ENCODE measurements at regions of chr16 and their contacts with region 1.

Region 1: DNA sequence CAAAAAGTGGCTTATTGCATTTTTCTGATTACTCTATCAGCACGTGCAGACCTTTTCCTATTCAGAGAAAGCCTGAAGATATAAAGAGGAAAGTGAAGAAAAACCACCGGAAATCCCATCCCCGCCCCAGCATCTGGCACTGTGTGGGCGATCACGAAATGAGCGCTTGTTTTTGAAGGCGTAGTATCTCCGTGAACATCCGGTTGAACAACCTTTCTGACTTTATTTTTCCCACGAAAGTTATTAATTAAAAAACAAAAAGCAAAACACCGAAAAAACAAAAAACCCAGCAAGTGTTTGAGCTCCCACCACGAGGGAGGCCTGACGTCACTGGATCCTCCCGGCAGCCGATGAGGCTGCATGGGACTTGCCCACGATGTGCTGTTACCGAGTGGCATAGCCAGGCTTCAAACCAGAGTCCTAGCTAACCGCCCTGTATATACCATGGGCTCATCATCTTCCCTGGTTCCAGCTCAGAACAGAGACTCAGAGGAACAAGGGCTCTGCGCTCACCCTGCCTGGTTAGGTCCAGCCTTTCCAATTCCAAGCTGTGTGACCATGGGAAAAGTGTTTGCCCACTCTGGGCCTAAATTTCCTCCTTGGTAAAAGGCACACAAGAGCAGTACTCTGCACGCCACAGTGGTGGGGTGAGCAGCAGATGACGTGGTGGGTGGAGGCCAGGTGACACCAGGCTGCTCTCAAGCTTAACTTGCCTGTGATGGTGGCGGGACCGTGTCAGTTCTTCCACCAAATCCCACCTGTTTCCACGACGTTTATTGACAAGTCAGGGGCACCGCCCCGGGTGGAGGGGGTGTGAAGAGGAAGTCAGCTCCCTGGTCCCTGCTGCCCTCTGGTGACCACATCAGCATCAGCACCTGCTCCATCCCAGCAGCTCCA is 34.3 kb upstream of the IL21R start:
- DNase-seq: peak; percentile 73 to 95 (median 92)
- ATAC-seq: peak; percentile 82 to 85
- H3K4me3 Mint-ChIP-seq: peak overlapping the region; percentile 49 to 75 (median 71)
- H3K27ac Mint-ChIP-seq: peak overlapping the region in 9 of 10 donors; percentile 92 to 100 (median 99)
- H3K4me1 Mint-ChIP-seq: peaks cover 23 to 78% (median 55%) of the 10 kb centered on the region in 4 donors
- H3K27me3 Mint-ChIP-seq: no peaks in the 10 kb centered on the region

Region 2: DNA sequence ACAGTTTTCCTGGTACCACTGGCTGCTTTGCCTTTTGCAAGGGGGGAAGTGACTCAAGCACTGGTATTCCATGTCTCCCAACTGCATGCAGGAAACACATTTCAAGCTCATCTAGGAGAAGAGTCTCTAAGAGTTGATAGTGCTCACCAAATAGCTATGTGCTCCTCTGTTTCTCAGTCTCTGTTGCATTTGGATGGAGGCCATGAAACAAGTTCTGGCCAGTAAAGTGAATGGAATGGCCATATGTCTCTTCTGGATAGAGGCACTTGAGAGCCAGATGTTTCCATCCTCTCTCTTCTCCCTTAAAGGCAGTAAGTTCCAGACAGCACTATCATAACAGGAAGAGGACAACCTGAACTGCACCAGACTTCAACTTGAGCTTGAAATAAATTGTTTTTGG is 240.4 kb before region 1 on chr16:
- POLR2A ChIA-PET with region 1: no interaction called
- DNase-seq: no peak
- ATAC-seq: no peak
- H3K4me3 Mint-ChIP-seq: no peak overlapping the region
- H3K27ac Mint-ChIP-seq: no peak overlapping the region
- H3K4me1 Mint-ChIP-seq: no peaks in the 10 kb centered on the region
- H3K27me3 Mint-ChIP-seq: peaks cover 0 to 4% (median 2%) of the 10 kb centered on the region in 5 donors

Region 3: GRCh38 chr16:27154705-27155521 is 212.8 kb before region 1 on chr16:
- POLR2A ChIA-PET with region 1: interaction called, 12 read pairs
- DNase-seq: peak; percentile 27 to 79 (median 63)
- ATAC-seq: peak; percentile 63 to 73
- H3K4me3 Mint-ChIP-seq: no peak overlapping the region
- H3K27ac Mint-ChIP-seq: peak overlapping the region in 7 of 10 donors; percentile 20 to 92 (median 73)
- H3K4me1 Mint-ChIP-seq: peaks cover 10 to 21% (median 15%) of the 10 kb centered on the region in 4 donors
- H3K27me3 Mint-ChIP-seq: no peaks in the 10 kb centered on the region

Region 4: DNA sequence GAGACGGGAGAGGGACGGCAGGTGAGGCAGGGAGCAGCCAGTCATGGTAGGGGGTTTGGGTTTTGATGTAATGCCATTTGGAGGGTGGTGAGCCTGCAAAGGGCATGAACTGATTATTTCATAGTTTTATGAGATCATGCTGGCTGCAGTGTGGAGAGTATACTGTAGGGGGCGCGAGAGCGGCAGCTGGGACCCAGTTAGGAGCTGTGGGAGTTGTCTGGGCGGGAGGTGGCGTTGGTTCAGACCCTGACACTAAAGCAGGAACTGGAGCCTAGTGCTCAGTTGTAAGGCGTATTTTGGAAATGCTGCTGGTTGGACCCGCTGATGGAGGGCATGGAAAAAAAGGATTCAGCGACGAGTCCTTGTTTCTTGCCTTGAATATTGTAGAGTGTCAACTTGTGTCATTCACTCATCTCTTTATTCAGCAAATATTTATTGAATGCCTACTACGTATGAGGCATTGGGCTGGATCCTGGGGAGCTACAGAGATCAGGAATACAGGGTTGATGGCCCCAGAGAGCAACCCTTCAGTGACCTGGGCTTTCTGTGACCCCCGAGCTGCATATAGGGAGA is 188.1 kb before region 1 on chr16:
- POLR2A ChIA-PET with region 1: interaction called, 26 read pairs
- DNase-seq: peak; percentile 76 to 93 (median 86)
- ATAC-seq: peak; percentile 98 to 99
- H3K4me3 Mint-ChIP-seq: peak overlapping the region in 6 of 10 donors; percentile 0 to 30 (median 3)
- H3K27ac Mint-ChIP-seq: peak overlapping the region; percentile 53 to 92 (median 83)
- H3K4me1 Mint-ChIP-seq: peaks cover 23 to 40% (median 36%) of the 10 kb centered on the region in 4 donors
- H3K27me3 Mint-ChIP-seq: no peaks in the 10 kb centered on the region

Region 5: GRCh38 chr16:27401768-27402568 is 34.3 kb after region 1 on chr16 and contains the start of gene IL21R:
- POLR2A ChIA-PET with region 1: interaction called, 160 read pairs
- DNase-seq: peak; percentile 71 to 94 (median 82)
- ATAC-seq: peak; percentile 80 to 81
- H3K4me3 Mint-ChIP-seq: peak within 1 kb of the TSS; percentile 97 to 99 (median 98)
- H3K27ac Mint-ChIP-seq: peak within 1 kb of the TSS; percentile 92 to 100 (median 99)
- H3K4me1 Mint-ChIP-seq: peaks cover 29 to 87% (median 73%) of the 10 kb centered on the region in 4 donors
- H3K27me3 Mint-ChIP-seq: no peaks in the 10 kb centered on the region
- polyA plus RNA-seq, gene IL21R: 26.5 to 47.1 (median 33.9) TPM

Region 6: DNA sequence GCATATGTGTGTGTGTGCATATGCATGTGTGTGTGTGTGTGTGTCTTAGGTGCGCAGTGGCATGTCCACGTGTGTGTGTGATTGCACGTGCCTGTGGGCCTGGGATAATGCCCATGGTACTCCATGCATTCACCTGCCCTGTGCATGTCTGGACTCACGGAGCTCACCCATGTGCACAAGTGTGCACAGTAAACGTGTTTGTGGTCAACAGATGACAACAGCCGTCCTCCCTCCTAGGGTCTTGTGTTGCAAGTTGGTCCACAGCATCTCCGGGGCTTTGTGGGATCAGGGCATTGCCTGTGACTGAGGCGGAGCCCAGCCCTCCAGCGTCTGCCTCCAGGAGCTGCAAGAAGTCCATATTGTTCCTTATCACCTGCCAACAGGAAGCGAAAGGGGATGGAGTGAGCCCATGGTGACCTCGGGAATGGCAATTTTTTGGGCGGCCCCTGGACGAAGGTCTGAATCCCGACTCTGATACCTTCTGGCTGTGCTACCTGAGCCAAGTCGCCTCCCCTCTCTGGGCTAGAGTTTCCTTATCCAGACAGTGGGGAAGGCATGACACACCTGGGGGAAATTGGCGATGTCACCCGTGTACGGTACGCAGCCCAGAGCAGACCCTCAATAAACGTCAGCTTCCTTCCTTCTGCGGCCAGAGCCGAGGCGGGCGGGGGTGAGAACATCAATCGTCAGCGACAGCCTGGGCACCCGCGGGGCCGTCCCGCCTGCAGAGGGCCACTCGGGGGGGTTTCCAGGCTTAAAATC is 81.9 kb after region 1 on chr16:
- POLR2A ChIA-PET with region 1: interaction called, 20 read pairs
- DNase-seq: peak; percentile 65 to 90 (median 84)
- ATAC-seq: peak; percentile 61 to 78
- H3K4me3 Mint-ChIP-seq: peak overlapping the region; percentile 58 to 86 (median 74)
- H3K27ac Mint-ChIP-seq: peak overlapping the region; percentile 81 to 99 (median 96)
- H3K4me1 Mint-ChIP-seq: peaks cover 48 to 93% (median 88%) of the 10 kb centered on the region in 4 donors
- H3K27me3 Mint-ChIP-seq: no peaks in the 10 kb centered on the region

Measured in naive thymus-derived CD8-positive, alpha-beta T cell (primary cell).